ENCODE measurements at regions of chr16 and their contacts with region 1.

Region 1: GRCh38 chr16:29815793-29816693 is at the start of gene PAGR1:
- H3K4me3 Mint-ChIP-seq: peak within 1 kb of the TSS; percentile 96
- H3K27ac Mint-ChIP-seq: peak within 1 kb of the TSS; percentile 98
- H3K4me1 Mint-ChIP-seq: peaks cover 76% of the 10 kb centered on the region
- H3K27me3 Mint-ChIP-seq: peaks cover 36% of the 10 kb centered on the region

Region 2: GRCh38 chr16:29645694-29646187 is 170.3 kb before region 1 on chr16:
- intact Hi-C with region 1: loop called (anchors 10 kb)
- H3K4me3 Mint-ChIP-seq: peak overlapping the region; percentile 14
- H3K27ac Mint-ChIP-seq: peak overlapping the region; percentile 91
- H3K4me1 Mint-ChIP-seq: peaks cover 70% of the 10 kb centered on the region
- H3K27me3 Mint-ChIP-seq: peaks cover 2% of the 10 kb centered on the region

Region 3: GRCh38 chr16:29738514-29738913 is 77.5 kb before region 1 on chr16:
- intact Hi-C with region 1: no loop called
- H3K4me3 Mint-ChIP-seq: no peak overlapping the region
- H3K27ac Mint-ChIP-seq: peak overlapping the region; percentile 86
- H3K4me1 Mint-ChIP-seq: peaks cover 80% of the 10 kb centered on the region
- H3K27me3 Mint-ChIP-seq: peaks cover 4% of the 10 kb centered on the region

Region 4: DNA sequence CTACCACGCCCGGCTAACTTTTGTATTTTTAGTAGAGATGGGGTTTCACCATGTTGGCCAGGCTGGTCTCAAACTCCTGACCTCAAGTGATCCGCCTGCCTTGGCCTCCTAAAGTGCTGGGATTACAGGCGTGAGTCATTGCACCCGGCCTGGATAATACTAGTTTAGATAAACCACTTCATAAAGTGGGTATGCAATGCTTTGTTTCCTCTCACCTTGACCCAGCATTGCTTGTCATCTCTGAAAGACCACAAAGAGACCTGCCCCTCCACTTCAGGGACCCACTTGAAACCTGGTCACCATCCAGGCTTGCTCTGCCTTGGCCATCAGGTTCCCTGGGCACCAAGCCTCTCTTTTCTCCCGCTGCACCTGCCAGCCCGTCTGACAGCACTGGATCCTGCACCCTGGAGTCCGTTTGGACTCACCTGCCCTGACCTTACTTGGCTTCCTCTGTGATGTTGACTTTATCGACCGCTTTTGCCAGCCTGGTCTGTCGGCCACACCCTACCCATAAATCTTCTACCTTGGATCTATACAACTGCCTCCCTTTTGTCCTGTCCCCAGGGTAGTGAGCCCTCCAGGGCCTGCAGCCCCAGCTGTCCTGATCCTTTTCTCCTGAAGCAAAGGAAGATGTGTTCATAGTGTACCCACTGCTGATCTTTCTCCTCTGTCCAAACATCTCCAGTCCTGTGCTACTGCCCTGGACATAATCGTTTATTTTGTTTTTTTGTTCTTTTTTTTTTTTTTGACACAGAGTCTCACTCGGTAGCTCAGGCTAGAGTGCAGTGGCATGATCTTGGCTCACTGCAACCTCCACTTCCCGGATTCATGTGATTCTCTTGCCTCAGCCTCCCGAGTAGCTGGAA is 50.6 kb before region 1 on chr16:
- intact Hi-C with region 1: no loop called
- H3K4me3 Mint-ChIP-seq: no peak overlapping the region
- H3K27ac Mint-ChIP-seq: no peak overlapping the region
- H3K4me1 Mint-ChIP-seq: peaks cover 13% of the 10 kb centered on the region
- H3K27me3 Mint-ChIP-seq: peaks cover 2% of the 10 kb centered on the region

Region 5: DNA sequence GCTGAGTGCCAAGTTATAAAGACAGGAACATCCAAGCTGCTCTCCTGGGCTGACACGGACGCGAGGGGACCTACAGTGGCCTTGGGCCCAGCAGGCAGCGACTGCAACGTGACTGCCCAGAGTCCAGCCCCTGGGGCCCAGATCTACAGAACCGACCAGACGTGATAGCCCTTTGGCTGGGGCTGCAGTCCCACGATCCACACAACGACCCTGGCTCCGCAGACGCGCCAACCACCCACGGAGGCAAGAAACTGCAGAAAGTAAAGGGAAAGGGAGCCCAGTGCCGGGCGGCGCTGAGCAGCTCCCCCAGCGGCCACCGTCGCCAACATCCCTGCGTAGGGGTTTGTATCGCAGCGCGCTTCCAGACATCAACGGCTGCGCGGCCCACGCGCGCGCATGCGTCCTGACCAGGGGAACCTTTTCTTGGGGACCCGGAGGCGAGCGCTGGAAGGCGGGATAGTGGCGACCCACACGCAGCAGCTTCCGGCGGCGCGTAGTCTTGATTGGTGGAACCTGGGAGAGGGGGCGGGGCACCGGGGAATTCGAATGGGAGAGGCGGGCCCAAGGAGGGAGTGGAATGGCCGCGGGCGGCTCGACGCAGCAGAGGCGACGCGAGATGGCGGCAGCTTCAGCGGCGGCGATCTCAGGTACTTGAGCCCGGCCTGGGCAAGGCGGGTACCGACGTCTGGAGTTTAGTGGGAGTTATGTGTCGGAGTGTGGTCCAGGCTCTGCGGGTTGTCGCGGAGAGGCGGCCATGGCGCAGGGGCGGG is 25.7 kb before region 1 on chr16 and contains the start of gene KIF22:
- intact Hi-C with region 1: loop called (anchors 2 kb)
- H3K4me3 Mint-ChIP-seq: peak within 1 kb of the TSS; percentile 81
- H3K27ac Mint-ChIP-seq: peak within 1 kb of the TSS; percentile 77
- H3K4me1 Mint-ChIP-seq: peaks cover 49% of the 10 kb centered on the region
- H3K27me3 Mint-ChIP-seq: peaks cover 2% of the 10 kb centered on the region

Region 6: DNA sequence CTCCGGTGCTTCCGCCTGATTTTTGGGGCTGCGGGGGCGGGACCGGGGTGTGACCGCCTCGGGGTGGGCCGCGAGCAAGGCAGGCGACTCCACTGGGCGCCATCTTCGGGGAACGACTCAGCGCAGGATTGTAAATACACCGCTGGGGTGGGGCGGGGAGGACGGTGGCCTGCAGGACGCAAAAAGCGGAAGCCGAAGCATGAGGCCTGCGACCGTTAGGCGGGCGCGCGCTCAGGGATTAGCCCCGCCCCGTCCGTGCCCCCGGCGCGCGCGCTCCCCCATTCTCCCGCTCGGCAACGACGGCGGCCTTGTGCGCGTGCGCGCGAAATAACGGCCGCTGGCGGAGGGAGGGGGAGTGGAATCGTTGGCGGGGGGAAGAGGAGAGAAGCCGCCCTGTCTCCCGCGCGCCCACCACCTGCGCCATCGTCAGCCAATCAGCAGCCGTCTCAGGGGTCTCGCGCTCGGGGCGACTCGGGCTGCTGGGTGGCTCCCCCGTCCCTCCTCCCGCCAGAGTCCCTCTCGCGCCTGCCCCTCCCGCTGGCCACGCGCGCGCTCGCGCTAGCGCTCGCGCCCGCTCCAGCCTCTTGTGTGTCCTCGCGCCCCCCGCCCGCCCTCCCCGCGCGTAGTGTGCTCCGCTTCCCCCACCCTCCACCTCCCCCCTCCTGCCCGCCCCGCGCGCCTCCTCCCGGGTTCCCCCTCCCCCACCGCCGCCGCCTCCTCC is 10.5 kb before region 1 on chr16:
- intact Hi-C with region 1: loop called (anchors 1 kb)
- H3K4me3 Mint-ChIP-seq: peak overlapping the region; percentile 99
- H3K27ac Mint-ChIP-seq: peak overlapping the region; percentile 98
- H3K4me1 Mint-ChIP-seq: peaks cover 56% of the 10 kb centered on the region
- H3K27me3 Mint-ChIP-seq: no peaks in the 10 kb centered on the region

Region 7: GRCh38 chr16:29862884-29863668 is 47.0 kb after region 1 on chr16 and contains the start of gene CDIPT:
- intact Hi-C with region 1: loop called (anchors 5 kb)
- H3K4me3 Mint-ChIP-seq: peak within 1 kb of the TSS; percentile 96
- H3K27ac Mint-ChIP-seq: peak within 1 kb of the TSS; percentile 98
- H3K4me1 Mint-ChIP-seq: peaks cover 29% of the 10 kb centered on the region
- H3K27me3 Mint-ChIP-seq: peaks cover 5% of the 10 kb centered on the region

Region 8: DNA sequence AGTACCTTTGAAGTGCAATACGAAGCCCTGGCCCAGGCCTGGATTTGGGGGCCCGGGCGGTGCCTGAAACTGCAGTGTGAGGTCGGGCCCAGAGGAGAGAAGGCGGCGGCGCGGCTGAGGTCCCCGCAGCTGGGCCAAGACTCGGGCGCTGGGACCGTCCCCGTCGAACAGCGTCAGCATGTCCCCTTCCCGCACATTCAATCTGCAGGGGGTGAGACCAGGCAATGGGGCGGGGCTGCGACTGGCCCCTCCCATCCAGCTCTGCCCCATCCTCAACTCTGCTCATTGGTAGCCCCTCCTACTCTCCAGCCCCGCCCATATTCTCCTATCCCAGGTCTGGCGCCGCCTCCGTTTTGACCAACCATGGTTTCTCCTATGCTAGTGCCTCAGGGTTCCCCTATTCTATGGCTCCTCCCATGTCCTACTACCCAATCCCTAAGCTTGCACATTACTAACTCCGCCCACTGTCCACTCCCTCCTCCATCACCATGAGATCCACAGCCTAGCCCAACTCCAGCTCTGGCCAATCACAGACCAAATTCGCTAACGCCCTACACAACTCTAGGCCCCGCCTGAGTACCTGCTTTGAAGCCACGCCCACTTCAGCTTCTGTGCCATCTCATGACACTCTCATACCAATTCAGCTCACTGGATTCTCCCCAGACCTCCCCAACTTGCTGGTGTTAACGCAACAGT is 61.4 kb after region 1 on chr16:
- intact Hi-C with region 1: no loop called
- H3K4me3 Mint-ChIP-seq: peak overlapping the region; percentile 72
- H3K27ac Mint-ChIP-seq: no peak overlapping the region
- H3K4me1 Mint-ChIP-seq: peaks cover 20% of the 10 kb centered on the region
- H3K27me3 Mint-ChIP-seq: peaks cover 55% of the 10 kb centered on the region

Region 9: GRCh38 chr16:29973384-29974246 is 157.6 kb after region 1 on chr16 and contains the start of gene TAOK2:
- intact Hi-C with region 1: loop called (anchors 10 kb)
- H3K4me3 Mint-ChIP-seq: peak within 1 kb of the TSS; percentile 90
- H3K27ac Mint-ChIP-seq: peak within 1 kb of the TSS; percentile 88
- H3K4me1 Mint-ChIP-seq: peaks cover 63% of the 10 kb centered on the region
- H3K27me3 Mint-ChIP-seq: no peaks in the 10 kb centered on the region